ENCODE measurements at regions of chr5 and their contacts with region 1.

Region 1: GRCh38 chr5:133610489-133611356 is 1.6 kb downstream of the FSTL4 start:
- DNase-seq: peak; percentile 72
- ATAC-seq: peak; percentile 79
- H3K4me3 Mint-ChIP-seq: peak overlapping the region; percentile 49
- H3K27ac Mint-ChIP-seq: no peak overlapping the region
- H3K4me1 Mint-ChIP-seq: peaks cover 9% of the 10 kb centered on the region
- H3K27me3 Mint-ChIP-seq: peaks cover 58% of the 10 kb centered on the region

Region 2: GRCh38 chr5:133552931-133553525 is 57.7 kb before region 1 on chr5:
- CTCF ChIA-PET with region 1: interaction called, 6 read pairs
- POLR2A ChIA-PET with region 1: no interaction called
- intact Hi-C with region 1: loop called in 1 of 2 experiments (anchors 1 kb)
- DNase-seq: peak; percentile 78
- ATAC-seq: peak; percentile 80
- H3K4me3 Mint-ChIP-seq: no peak overlapping the region
- H3K27ac Mint-ChIP-seq: no peak overlapping the region
- H3K4me1 Mint-ChIP-seq: no peaks in the 10 kb centered on the region
- H3K27me3 Mint-ChIP-seq: peaks cover 24% of the 10 kb centered on the region

Region 3: DNA sequence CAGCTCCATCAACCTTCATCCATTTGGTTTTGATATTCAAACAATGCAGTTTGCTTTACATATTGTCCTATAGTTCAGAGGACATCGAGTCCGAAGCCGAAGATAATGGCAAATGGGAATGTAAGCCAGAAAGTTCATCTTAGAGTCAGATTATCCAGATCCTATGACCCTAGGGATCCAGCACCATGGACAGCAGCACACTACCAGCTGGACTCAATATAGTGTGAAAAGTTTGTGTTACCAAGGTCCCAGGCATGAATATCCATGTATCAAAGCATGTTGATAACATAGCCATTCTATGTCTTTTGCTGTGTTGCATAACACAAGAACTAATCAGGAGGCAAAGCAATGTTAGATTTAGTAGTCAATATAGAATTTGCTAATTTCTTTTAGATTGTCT is 44.7 kb before region 1 on chr5:
- CTCF ChIA-PET with region 1: no interaction called
- POLR2A ChIA-PET with region 1: no interaction called
- intact Hi-C with region 1: loop called in 1 of 2 experiments (anchors 5 kb)
- DNase-seq: peak; percentile 50
- ATAC-seq: no peak
- H3K4me3 Mint-ChIP-seq: no peak overlapping the region
- H3K27ac Mint-ChIP-seq: no peak overlapping the region
- H3K4me1 Mint-ChIP-seq: no peaks in the 10 kb centered on the region
- H3K27me3 Mint-ChIP-seq: peaks cover 23% of the 10 kb centered on the region